ENCODE measurements at regions of chr6 and their contacts with region 1.

Region 1: DNA sequence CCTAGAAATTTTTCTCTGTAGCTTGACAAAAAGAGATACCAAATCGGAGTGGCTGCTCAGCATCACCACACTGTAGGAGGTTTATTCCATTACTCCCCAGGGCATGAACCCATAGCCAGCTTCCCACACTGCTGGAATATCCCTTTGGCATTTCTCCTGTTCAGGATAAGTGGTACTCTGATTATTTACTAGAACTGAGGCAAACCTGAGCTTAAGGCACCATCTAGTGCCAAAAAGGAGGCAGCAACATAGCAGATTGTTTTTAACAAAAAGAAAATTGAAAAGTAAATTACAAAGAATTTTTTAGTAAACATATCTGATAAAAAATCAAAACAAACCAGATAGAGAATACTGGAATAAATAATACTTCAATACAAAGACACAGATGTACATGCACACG is 181.7 kb downstream of the WDR27 start:
- DNase-seq: peak; percentile 70
- ATAC-seq: peak; percentile 77
- H3K4me3 ChIP-seq: no peak overlapping the region
- H3K27ac ChIP-seq: no peak overlapping the region
- H3K4me1 ChIP-seq: no peaks in the 10 kb centered on the region
- H3K27me3 ChIP-seq: no peaks in the 10 kb centered on the region
- CTCF ChIP-seq: peak; percentile 82
- POLR2A ChIP-seq: peak; percentile 32; the same call in 1 of the 2 replicates
- RAD21 ChIP-seq: peak; percentile 91

Region 2: DNA sequence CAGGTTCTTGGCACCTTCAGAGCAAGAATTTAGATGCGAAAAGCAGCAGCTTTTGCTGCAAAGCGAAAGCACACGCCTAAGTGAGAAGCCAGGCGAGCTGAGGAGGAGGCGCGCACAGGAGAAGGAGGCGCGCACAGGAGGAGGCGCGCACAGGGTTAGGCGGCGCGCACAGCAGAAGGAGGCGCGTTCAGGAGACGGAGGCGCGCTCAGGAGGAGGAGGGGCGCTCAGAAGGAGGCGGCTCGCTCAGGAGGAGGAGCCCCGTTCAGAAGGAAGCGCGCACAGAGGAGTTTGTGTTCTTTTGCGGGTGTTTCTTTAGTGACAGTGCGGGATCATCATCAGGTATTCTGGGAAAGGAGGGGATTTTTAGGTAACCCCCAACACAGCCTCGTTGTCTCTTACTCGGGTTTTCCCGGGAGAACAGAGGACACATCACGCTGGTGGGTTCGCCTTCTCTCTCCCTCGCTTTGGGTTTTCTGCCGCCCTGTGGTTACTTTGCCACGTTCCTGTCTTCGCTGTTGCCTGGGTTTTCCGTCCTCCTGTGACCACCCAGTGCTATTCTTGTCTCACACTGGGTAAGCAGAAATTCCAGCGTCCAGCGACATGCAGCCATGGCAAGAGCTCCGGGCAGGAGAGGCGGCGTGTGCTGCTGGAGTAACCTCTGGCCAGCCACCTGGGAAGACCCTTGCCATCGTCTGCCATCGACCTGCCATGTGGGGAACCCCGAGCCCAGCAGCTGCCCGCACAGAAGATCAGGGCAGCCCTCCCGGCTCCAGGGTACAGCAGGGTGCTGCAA is 134.7 kb after region 1 on chr6:
- CTCF ChIA-PET with region 1: no interaction called
- POLR2A ChIA-PET with region 1: no interaction called
- dilution Hi-C with region 1: no loop called
- in situ Hi-C with region 1: no loop called
- intact Hi-C with region 1: loop called (anchors 2 kb)
- DNase-seq: peak; percentile 61
- ATAC-seq: peak; percentile 93
- H3K4me3 ChIP-seq: peak overlapping the region; percentile 55
- H3K27ac ChIP-seq: peak overlapping the region; percentile 56
- H3K4me1 ChIP-seq: no peaks in the 10 kb centered on the region
- H3K27me3 ChIP-seq: no peaks in the 10 kb centered on the region
- CTCF ChIP-seq: peak; percentile 41; the same call in 1 of the 2 replicates
- POLR2A ChIP-seq: no peak; the same call in 1 of the 2 replicates
- RAD21 ChIP-seq: peak; percentile 56

Region 3: GRCh38 chr6:169701954-169702839 is 182.1 kb after region 1 on chr6 and contains the starts of genes C6orf120 and WDR27:
- CTCF ChIA-PET with region 1: no interaction called
- POLR2A ChIA-PET with region 1: no interaction called
- dilution Hi-C with region 1: no loop called
- in situ Hi-C with region 1: no loop called
- intact Hi-C with region 1: loop called (anchors 5 kb)
- DNase-seq: peak; percentile 95
- ATAC-seq: peak; percentile 93
- H3K4me3 ChIP-seq: peak within 1 kb of the TSS; percentile 76
- H3K27ac ChIP-seq: peak within 1 kb of the TSS; percentile 89
- H3K4me1 ChIP-seq: peaks cover 9% of the 10 kb centered on the region
- H3K27me3 ChIP-seq: no peaks in the 10 kb centered on the region
- CTCF ChIP-seq: no peak
- POLR2A ChIP-seq: peak; percentile 86
- RAD21 ChIP-seq: no peak; the same call in 1 of the 2 replicates
- total RNA-seq, gene C6orf120: 26.7 and 44.2 TPM in 2 replicates
- total RNA-seq, gene WDR27: 7.0 and 7.8 TPM in 2 replicates